Ascending aorta (tissue), 2 donors: ENCODE measurements at regions of chr6 and their contacts with region 1.

Region 1: GRCh38 chr6:148407372-148407771 is 64.7 kb downstream of the SASH1 start:
- DNase-seq: no peak
- H3K4me3 ChIP-seq: no peak overlapping the region
- H3K27ac ChIP-seq: peak overlapping the region; percentile 78 to 94
- H3K4me1 ChIP-seq: peaks cover 5 to 24% of the 10 kb centered on the region in 2 donors
- H3K27me3 ChIP-seq: no peaks in the 10 kb centered on the region
- CTCF ChIP-seq: no peak

Region 2: GRCh38 chr6:148203970-148204369 is 203.4 kb before region 1 on chr6:
- intact Hi-C with region 1: no loop called
- DNase-seq: no peak
- H3K4me3 ChIP-seq: peak overlapping the region in 1 of 2 donors; percentile 25
- H3K27ac ChIP-seq: no peak overlapping the region
- H3K4me1 ChIP-seq: peaks cover 0 to 5% of the 10 kb centered on the region in 2 donors
- H3K27me3 ChIP-seq: no peaks in the 10 kb centered on the region
- CTCF ChIP-seq: no peak

Region 3: GRCh38 chr6:148440877-148441453 is 33.6 kb after region 1 on chr6:
- intact Hi-C with region 1: loop called (anchors 5 kb)
- DNase-seq: peak in 1 of 2 donors; percentile 85
- H3K4me3 ChIP-seq: peak overlapping the region in 1 of 2 donors; percentile 24
- H3K27ac ChIP-seq: peak overlapping the region; percentile 81 to 83
- H3K4me1 ChIP-seq: peaks cover 12 to 38% of the 10 kb centered on the region in 2 donors
- H3K27me3 ChIP-seq: no peaks in the 10 kb centered on the region
- CTCF ChIP-seq: no peak

Region 4: DNA sequence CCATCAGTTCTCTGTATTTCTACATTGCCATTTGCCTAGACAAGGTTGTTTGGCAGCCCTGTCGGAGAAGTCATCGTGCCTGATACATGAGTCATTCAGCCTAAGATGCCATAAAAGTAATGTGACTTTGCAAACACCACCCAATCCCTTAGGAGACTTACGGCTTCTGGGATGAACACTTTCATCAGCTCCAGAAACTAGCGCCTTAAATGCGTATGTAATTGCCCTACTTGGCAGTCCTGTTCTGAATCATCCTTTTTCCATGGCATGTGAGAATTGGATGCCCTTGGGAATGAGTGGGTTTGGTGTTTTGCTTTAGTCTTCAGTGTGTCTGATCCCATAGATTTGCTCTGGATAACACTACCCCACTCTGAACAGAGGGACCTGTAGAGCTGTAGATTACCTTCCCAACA is 93.8 kb after region 1 on chr6:
- intact Hi-C with region 1: loop called (anchors 5 kb)
- DNase-seq: peak in 1 of 2 donors; percentile 89
- H3K4me3 ChIP-seq: peak overlapping the region in 1 of 2 donors; percentile 33
- H3K27ac ChIP-seq: peak overlapping the region; percentile 87 to 88
- H3K4me1 ChIP-seq: peaks cover 0 to 37% of the 10 kb centered on the region in 2 donors
- H3K27me3 ChIP-seq: no peaks in the 10 kb centered on the region
- CTCF ChIP-seq: no peak

Region 5: DNA sequence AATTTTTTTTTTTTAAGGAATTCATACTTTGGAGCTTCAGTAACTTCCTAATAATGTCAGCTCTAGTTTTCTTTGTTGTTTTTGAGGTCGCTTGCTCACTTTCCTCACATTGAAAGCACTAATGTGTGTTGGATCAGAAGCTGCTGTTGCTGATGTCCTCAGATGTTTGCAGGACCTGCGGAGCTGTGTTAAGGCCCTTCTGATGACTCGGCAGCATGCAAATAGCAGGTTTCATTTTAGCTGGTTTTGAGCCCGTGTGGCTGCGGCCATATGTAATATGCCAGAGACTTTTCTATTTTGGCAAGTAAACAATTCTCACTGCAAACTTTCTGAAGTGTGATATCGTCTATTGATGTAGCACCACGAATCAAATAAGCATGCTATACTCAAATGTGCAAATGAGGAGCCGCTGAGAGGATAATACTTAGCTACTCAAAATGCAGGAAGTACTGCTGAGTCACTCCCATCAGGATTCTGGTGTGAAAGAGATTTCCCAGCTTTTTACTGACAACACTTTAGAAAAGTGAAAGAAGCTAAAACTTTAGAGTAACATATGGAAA is 123.1 kb after region 1 on chr6:
- intact Hi-C with region 1: loop called (anchors 5 kb)
- DNase-seq: peak in 1 of 2 donors; percentile 80
- H3K4me3 ChIP-seq: peak overlapping the region in 1 of 2 donors; percentile 51
- H3K27ac ChIP-seq: peak overlapping the region; percentile 77
- H3K4me1 ChIP-seq: peaks cover 0 to 22% of the 10 kb centered on the region in 2 donors
- H3K27me3 ChIP-seq: no peaks in the 10 kb centered on the region
- CTCF ChIP-seq: no peak